Activated naive CD4-positive, alpha-beta T cell treated with anti-CD3 and anti-CD28 coated beads for 36 hours (primary cell): ENCODE measurements at regions of chrX and their contacts with region 1.

Region 1: DNA sequence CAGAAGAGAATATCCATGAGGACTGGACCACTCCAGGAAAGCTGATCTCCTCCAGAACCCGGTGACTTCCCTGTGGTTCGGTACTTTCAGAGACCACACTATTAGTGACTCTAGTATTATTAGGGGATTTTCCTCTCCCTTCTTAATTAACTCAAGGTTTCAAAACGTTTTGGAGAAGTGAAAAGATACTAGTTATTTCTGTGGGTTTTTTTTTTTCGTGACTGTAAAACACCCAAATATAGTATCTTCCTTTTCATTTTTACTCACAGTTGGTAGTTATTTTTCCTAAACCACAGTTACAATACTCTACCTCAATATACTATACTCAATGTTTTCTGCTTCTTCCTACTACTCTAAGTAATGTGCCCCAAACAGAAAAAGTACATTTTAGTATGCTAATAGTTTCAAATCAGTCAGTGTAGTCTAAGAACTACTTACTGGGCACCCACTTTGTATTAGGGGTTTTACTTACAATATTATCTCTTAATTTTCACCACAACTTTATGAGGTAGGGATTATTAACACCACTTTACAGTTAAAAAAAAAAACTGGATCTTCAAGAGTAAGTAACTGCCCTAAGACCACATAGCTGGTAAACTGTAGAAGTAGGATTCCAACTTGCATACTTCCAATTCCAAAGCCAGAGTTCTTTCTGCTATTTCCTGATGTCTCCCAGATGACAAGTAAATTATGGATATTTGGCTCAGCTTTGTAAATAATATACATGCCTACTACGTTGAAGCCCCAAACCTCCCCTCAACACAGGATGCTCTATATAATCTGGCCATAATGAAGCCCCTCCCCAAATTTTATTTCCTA is 45.0 kb downstream of the SLC9A7 start:
- DNase-seq: no peak
- H3K4me3 Mint-ChIP-seq: no peak overlapping the region
- H3K27ac Mint-ChIP-seq: no peak overlapping the region
- H3K4me1 Mint-ChIP-seq: peaks cover 64% of the 10 kb centered on the region
- H3K27me3 Mint-ChIP-seq: no peaks in the 10 kb centered on the region

Region 2: DNA sequence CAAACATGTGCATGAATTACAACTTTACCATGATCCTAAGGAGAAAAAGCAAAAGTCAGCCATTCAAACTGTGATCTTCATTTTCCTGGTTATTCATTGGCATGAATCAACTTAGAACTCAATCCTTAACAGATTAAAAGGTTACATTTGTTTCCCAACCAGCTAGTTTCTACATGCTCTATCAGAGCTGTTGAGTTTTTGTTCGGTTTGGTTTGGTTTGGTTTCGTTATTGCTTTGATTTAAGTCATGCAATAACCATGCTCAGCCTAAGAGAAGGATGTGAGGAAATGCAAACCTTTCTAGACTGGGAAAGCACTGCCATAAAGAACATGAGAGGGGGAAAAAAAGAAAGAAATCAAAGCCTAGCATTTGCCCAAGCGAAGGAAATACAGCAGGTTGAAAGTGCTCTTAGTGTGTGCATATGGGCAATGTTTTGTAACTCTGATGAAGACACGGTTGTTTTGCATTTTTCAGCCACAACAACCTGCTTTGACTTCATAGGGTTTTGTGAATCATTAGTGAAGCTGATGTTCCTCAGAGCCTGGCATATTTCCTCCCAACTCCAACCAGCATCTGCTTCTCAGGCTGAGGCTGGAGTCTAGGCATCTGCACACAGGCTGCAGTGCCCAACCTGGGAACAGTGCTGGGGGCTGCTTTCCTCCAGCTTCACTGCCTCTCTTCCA is 402.9 kb before region 1 on chrX:
- CTCF ChIA-PET with region 1: no interaction called
- intact Hi-C with region 1: no loop called
- DNase-seq: no peak
- H3K4me3 Mint-ChIP-seq: peak overlapping the region; percentile 38
- H3K27ac Mint-ChIP-seq: peak overlapping the region; percentile 77
- H3K4me1 Mint-ChIP-seq: peaks cover 18% of the 10 kb centered on the region
- H3K27me3 Mint-ChIP-seq: no peaks in the 10 kb centered on the region

Region 3: GRCh38 chrX:46665232-46666152 is 48.4 kb before region 1 on chrX:
- CTCF ChIA-PET with region 1: no interaction called
- intact Hi-C with region 1: loop called (anchors 5 kb)
- DNase-seq: peak; percentile 49
- H3K4me3 Mint-ChIP-seq: no peak overlapping the region
- H3K27ac Mint-ChIP-seq: peak overlapping the region; percentile 84
- H3K4me1 Mint-ChIP-seq: peaks cover 17% of the 10 kb centered on the region
- H3K27me3 Mint-ChIP-seq: no peaks in the 10 kb centered on the region

Region 4: GRCh38 chrX:46733226-46733625 is 19.3 kb after region 1 on chrX:
- CTCF ChIA-PET with region 1: no interaction called
- intact Hi-C with region 1: loop called (anchors 2 kb)
- DNase-seq: no peak
- H3K4me3 Mint-ChIP-seq: no peak overlapping the region
- H3K27ac Mint-ChIP-seq: peak overlapping the region; percentile 31
- H3K4me1 Mint-ChIP-seq: peaks cover 24% of the 10 kb centered on the region
- H3K27me3 Mint-ChIP-seq: no peaks in the 10 kb centered on the region

Region 5: DNA sequence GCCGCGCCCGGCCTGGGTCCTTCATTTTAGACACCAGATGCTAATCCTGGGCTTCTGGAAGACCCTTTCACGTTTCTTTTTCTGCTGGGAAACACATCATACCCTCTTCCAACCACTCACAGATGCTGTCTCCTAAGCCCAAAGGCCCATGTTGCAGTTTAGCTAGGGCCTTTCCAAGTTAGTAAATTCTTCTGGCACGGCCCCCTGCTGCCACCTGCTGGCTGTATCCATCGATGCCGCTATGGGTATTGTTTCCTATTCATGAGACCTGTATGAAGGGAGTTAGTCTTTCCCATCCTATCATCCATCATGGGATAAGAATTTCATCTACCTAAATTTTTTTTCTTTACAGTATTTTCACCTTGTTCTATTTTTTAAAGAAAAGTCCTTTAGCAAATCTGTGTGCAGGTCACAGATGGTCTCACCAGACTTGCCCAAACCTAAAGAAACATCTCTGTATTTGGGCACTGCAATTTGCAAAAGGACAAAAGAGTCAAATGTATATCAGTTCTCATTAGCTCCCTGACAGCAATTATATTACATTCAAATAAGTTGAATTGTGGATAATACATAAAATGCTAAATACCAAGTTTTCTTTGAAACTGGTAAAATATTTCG is 82.8 kb after region 1 on chrX:
- CTCF ChIA-PET with region 1: no interaction called
- intact Hi-C with region 1: loop called (anchors 5 kb)
- DNase-seq: peak; percentile 86
- H3K4me3 Mint-ChIP-seq: no peak overlapping the region
- H3K27ac Mint-ChIP-seq: no peak overlapping the region
- H3K4me1 Mint-ChIP-seq: peaks cover 18% of the 10 kb centered on the region
- H3K27me3 Mint-ChIP-seq: no peaks in the 10 kb centered on the region